SK-N-SH (cell line): ENCODE measurements at regions of chr9 and their contacts with region 1.

Region 1: GRCh38 chr9:20622330-20623020 is at the start of gene MLLT3:
- DNase-seq: peak; percentile 96
- H3K4me3 ChIP-seq: peak within 1 kb of the TSS; percentile 81 to 100
- H3K27ac ChIP-seq: peak within 1 kb of the TSS; percentile 79 to 90
- H3K4me1 ChIP-seq: peaks cover 6 to 8% of the 10 kb centered on the region in 2 experiments; a peak in 3 of 4 replicates
- H3K27me3 ChIP-seq: no peaks in the 10 kb centered on the region
- CTCF ChIP-seq: no peak
- EP300 ChIP-seq: no peak
- RAD21 ChIP-seq: 0 out of 2 replicates have a peak, but pooled peaks have one; percentile 4
- polyA plus RNA-seq, gene MLLT3: 3.9 and 6.2 TPM in 2 replicates

Region 2: GRCh38 chr9:20356403-20357035 is 266.0 kb before region 1 on chr9:
- CTCF ChIA-PET with region 1: interaction called, 16 read pairs
- POLR2A ChIA-PET with region 1: no interaction called
- DNase-seq: peak; percentile 68
- H3K4me3 ChIP-seq: peak overlapping the region in 1 of 2 experiments; percentile 32; a peak in 1 of 4 replicates
- H3K27ac ChIP-seq: peak overlapping the region in 1 of 2 experiments; percentile 40; a peak in 1 of 4 replicates
- H3K4me1 ChIP-seq: peaks cover 15 to 19% of the 10 kb centered on the region in 2 experiments
- H3K27me3 ChIP-seq: no peaks in the 10 kb centered on the region
- CTCF ChIP-seq: peak; percentile 91
- EP300 ChIP-seq: no peak
- RAD21 ChIP-seq: peak; percentile 98

Region 3: GRCh38 chr9:20640331-20641187 is 18.1 kb after region 1 on chr9:
- CTCF ChIA-PET with region 1: interaction called, 13 read pairs
- POLR2A ChIA-PET with region 1: no interaction called
- DNase-seq: peak; percentile 28
- H3K4me3 ChIP-seq: no peak overlapping the region
- H3K27ac ChIP-seq: peak overlapping the region in 1 of 2 experiments; percentile 67; a peak in 2 of 4 replicates
- H3K4me1 ChIP-seq: peaks cover 0 to 8% of the 10 kb centered on the region in 2 experiments; a peak in 2 of 4 replicates
- H3K27me3 ChIP-seq: no peaks in the 10 kb centered on the region
- CTCF ChIP-seq: no peak
- EP300 ChIP-seq: no peak; a peak in 1 of 4 replicates
- RAD21 ChIP-seq: no peak